ENCODE measurements at regions of chr2 and their contacts with region 1.

Region 1: DNA sequence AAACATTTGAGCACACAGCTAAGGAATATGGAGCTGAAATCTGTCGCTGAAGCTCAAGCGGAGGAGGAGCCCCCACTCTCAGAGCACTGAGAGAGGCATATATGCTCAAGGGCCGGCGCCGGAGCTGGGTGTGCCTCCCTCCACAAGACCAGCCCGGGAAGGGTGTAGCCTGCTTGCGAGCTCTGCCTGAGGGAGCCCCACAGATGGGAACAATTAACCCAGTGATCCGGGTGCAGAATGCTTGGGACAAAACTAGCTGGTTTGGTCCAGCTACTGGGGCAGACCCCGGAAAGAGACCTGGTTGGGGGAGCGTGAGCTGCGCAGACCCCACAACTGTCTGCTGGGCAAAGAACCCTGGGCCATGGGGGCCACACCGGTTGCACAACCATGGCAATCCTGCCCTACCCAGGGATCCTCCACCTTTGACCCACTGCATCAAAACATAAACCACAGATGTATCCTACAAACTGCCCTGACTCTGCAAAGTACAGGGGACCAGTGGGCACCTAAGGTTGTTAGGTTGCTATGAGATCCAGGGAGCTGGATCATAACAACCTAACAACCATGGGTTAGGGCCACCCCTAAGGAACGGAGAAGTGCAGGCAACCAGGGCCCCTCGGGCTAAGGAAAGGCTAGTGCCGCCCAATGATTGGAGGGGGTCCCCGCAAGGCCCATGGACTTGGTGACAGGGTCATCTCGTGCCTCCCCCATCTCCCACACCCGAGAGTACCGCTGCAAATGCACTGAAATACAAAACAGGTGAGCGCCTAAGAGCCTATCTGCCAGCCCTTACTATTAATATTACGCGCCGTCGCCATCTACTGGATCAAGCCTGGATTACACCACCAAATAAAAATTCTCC is 53.4 kb upstream of the SCN1A start:
- DNase-seq: peak; percentile 79
- ATAC-seq: peak; percentile 96
- H3K4me3 ChIP-seq: no peak overlapping the region
- H3K27ac ChIP-seq: peak overlapping the region; percentile 34
- H3K4me1 ChIP-seq: peaks cover 42% of the 10 kb centered on the region
- H3K27me3 ChIP-seq: no peaks in the 10 kb centered on the region
- CTCF ChIP-seq: peak; percentile 91
- EP300 ChIP-seq: peak in 1 of 2 experiments; percentile 50; a peak in 2 of 4 replicates
- POLR2A ChIP-seq: no peak
- RAD21 ChIP-seq: peak; percentile 88

Region 2: DNA sequence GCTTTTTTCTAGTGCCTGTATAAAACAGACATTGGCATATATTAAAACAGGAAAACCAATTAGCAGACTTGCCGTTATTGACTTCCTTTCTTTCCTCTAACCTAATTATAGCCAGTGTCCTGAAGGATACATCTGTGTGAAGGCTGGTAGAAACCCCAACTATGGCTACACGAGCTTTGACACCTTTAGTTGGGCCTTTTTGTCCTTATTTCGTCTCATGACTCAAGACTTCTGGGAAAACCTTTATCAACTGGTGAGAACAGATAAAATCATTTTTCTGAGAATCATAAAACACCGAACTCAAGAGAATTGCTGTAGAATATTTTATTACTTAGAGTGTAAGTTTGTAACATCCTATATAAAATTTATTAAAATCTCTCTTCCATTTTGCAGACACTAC is 867.7 kb before region 1 on chr2:
- CTCF ChIA-PET with region 1: no interaction called
- POLR2A ChIA-PET with region 1: no interaction called
- in situ Hi-C with region 1: no loop called
- intact Hi-C with region 1: no loop called
- DNase-seq: no peak
- ATAC-seq: no peak
- H3K4me3 ChIP-seq: no peak overlapping the region
- H3K27ac ChIP-seq: no peak overlapping the region
- H3K4me1 ChIP-seq: no peaks in the 10 kb centered on the region
- H3K27me3 ChIP-seq: 0 out of 5 replicates have a peak, but pooled peaks cover 0 to 2% of the 10 kb centered on the region in 2 experiments
- CTCF ChIP-seq: no peak
- EP300 ChIP-seq: no peak
- POLR2A ChIP-seq: no peak
- RAD21 ChIP-seq: no peak

Region 3: DNA sequence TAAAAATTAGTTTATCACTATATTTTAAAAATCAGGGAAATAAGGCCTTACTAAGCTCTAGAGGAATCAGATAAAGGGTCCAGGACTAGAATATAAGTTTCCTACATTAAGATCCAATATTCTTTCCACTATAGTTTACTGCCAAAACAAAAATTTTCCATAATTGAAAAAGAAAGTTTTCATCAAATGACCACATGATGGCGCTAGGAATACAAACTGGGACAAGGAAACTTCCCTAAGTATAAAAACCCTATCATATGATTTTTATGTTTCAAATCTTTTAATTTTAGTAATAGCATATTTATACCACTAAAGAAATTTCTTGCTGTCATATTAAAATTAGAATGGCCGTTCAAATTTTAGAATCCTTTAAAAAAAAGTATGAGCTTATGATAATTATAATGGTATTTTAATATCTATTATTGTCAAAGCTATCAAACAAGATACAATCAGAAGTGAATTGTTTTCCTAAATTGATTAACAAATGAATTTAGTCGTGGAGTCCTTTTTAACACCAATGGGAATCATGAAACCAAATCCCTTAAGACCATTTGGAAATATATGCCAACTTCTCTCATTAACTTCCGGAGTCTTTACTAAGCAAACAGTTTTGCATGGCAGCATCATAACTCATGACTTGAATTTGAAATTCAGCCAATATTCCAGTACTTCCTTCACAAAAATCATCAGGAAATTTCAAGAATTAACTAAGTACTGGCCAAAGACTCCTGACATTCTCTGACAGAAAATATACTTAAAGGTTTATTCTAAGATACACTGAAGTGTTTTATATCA is 123.6 kb before region 1 on chr2:
- CTCF ChIA-PET with region 1: interaction called, 36 read pairs
- POLR2A ChIA-PET with region 1: no interaction called
- in situ Hi-C with region 1: loop called (anchors 5 kb)
- intact Hi-C with region 1: loop called (anchors 1 kb)
- DNase-seq: peak; percentile 47
- ATAC-seq: no peak
- H3K4me3 ChIP-seq: no peak overlapping the region
- H3K27ac ChIP-seq: no peak overlapping the region
- H3K4me1 ChIP-seq: peaks cover 6% of the 10 kb centered on the region; the same call in 1 of the 2 replicates
- H3K27me3 ChIP-seq: no peaks in the 10 kb centered on the region
- CTCF ChIP-seq: peak; percentile 62
- EP300 ChIP-seq: no peak
- POLR2A ChIP-seq: no peak
- RAD21 ChIP-seq: peak; percentile 37; the same call in 1 of the 2 replicates

Region 4: GRCh38 chr2:166127217-166128155 is 53.7 kb before region 1 on chr2 and contains the start of gene SCN1A:
- CTCF ChIA-PET with region 1: interaction called, 7 read pairs
- POLR2A ChIA-PET with region 1: interaction called, 3 read pairs
- in situ Hi-C with region 1: no loop called
- intact Hi-C with region 1: loop called (anchors 1 kb)
- DNase-seq: peak; percentile 89
- ATAC-seq: peak; percentile 86
- H3K4me3 ChIP-seq: peak within 1 kb of the TSS; percentile 35 to 62 (median 50)
- H3K27ac ChIP-seq: peak within 1 kb of the TSS; percentile 72
- H3K4me1 ChIP-seq: peaks cover 93% of the 10 kb centered on the region
- H3K27me3 ChIP-seq: no peaks in the 10 kb centered on the region
- CTCF ChIP-seq: peak; percentile 81
- EP300 ChIP-seq: peak in 1 of 2 experiments; percentile 76; a peak in 2 of 4 replicates
- POLR2A ChIP-seq: no peak
- RAD21 ChIP-seq: peak; percentile 62; the same call in 1 of the 2 replicates
- total RNA-seq, gene SCN1A: 19.6 and 39.4 TPM in 2 replicates

Region 5: DNA sequence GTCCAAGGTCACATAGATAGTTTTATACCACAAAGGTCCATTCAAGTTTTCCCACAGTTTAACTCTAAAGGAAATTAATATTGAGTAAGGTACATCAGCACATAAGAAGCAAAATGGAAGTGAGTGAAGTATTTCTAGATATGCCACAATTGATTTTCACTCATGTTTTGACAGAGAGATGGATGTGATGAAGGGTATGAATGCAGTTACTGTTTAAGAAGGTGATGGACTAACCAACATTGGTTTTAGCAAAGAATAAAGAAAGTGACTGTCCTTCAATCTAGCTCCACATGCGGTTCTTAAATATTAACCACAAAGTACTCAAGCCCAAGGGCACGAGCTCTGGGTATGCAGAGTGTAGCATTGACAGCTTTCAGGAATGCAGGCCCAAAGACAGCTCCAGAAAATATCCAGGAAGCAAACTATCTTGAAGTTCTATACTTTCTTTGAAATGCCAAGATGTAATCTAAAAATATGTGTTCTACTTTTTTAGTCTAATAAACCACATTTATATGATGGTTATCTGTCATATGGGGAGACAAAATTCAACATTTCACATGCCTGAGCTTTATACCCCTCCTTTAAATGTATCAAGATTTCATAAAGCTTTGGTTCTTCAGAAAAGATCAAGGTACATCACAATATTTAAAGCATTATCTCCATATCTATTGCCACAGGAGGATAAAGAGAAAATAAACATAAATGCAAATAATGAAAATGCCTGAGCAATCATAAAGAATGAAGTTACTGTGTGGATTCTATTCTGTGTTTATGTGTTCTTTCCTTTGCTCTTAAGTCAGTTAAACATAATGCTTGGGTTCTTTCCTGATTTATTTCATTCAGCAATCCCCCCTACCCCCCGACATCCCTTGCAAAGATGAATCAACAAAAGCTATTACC is 46.7 kb before region 1 on chr2:
- CTCF ChIA-PET with region 1: no interaction called
- POLR2A ChIA-PET with region 1: interaction called, 41 read pairs
- in situ Hi-C with region 1: no loop called
- intact Hi-C with region 1: no loop called
- DNase-seq: peak; percentile 100
- ATAC-seq: peak; percentile 97
- H3K4me3 ChIP-seq: peak overlapping the region in 2 of 3 experiments; percentile 28 to 42; a peak in 3 of 6 replicates
- H3K27ac ChIP-seq: peak overlapping the region; percentile 97
- H3K4me1 ChIP-seq: peaks cover 94% of the 10 kb centered on the region
- H3K27me3 ChIP-seq: no peaks in the 10 kb centered on the region
- CTCF ChIP-seq: no peak
- EP300 ChIP-seq: peak in 1 of 2 experiments; percentile 99; a peak in 3 of 4 replicates
- POLR2A ChIP-seq: peak; percentile 41 to 86; a peak in 3 of 4 replicates
- RAD21 ChIP-seq: no peak

Region 6: DNA sequence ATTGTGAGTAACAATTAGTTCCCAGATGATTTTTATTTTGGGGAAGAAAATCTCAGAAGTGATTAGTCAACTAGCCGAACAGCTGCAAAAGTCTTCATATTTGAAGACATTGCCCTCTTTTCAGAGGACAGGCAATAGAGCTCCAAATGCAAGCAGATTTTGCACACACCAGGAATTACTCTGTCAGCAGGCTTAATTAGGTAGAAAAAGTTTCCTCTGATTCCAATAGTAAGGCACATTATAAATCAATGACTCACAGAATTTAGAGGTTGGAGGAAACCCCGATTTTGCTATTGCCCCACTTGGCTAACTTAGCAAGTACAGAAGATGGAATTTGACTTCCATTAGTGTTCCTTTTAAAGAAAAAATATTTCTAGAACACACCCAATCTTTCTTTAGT is 22.6 kb before region 1 on chr2:
- CTCF ChIA-PET with region 1: interaction called, 5 read pairs
- POLR2A ChIA-PET with region 1: interaction called, 9 read pairs
- in situ Hi-C with region 1: no loop called
- intact Hi-C with region 1: loop called (anchors 2 kb)
- DNase-seq: no peak
- ATAC-seq: no peak
- H3K4me3 ChIP-seq: no peak overlapping the region
- H3K27ac ChIP-seq: no peak overlapping the region
- H3K4me1 ChIP-seq: peaks cover 71% of the 10 kb centered on the region
- H3K27me3 ChIP-seq: no peaks in the 10 kb centered on the region
- CTCF ChIP-seq: no peak
- EP300 ChIP-seq: no peak
- POLR2A ChIP-seq: no peak
- RAD21 ChIP-seq: no peak

Region 7: DNA sequence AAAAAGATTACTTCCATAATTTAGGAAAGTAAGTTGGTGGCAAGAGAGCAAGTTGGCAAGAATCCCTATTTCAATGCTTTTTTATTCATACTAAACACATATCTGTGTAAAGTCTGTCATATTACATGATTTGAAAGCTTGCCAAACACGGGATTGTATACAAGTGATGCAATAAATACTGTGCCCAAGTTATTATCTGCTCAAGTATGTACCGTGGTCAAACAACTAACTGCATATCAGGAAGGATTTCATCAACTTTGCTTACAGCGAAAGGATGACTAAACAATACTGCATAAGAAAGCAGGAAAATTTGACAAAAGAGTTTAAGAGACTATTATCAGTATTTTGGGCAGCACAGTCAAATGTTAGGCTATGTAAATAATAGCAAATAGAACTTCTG is 16.3 kb after region 1 on chr2:
- CTCF ChIA-PET with region 1: no interaction called
- POLR2A ChIA-PET with region 1: no interaction called
- in situ Hi-C with region 1: no loop called
- intact Hi-C with region 1: no loop called
- DNase-seq: peak; percentile 20
- ATAC-seq: no peak
- H3K4me3 ChIP-seq: no peak overlapping the region
- H3K27ac ChIP-seq: no peak overlapping the region
- H3K4me1 ChIP-seq: 0 out of 2 replicates have a peak, but pooled peaks cover 5% of the 10 kb centered on the region
- H3K27me3 ChIP-seq: no peaks in the 10 kb centered on the region
- CTCF ChIP-seq: no peak
- EP300 ChIP-seq: no peak
- POLR2A ChIP-seq: no peak
- RAD21 ChIP-seq: no peak

Region 8: DNA sequence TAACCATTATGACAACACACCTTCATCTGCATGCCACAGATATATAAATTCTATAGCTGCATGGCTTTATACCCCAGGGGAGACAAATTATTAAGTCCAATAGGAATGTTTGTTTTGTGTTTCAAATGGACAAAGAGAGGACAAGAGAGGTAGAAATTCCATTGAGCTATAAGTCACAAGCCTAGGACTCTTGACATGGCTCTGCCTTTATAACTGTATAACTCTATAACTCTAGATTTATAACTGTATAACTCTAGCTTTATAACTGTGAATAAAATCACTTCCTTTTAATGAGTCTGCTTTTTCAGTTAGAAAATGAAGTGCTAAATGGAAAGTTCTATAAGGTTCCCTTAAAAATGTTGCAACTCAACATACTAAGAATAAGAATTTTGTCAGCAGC is 88.1 kb after region 1 on chr2:
- CTCF ChIA-PET with region 1: no interaction called
- POLR2A ChIA-PET with region 1: no interaction called
- in situ Hi-C with region 1: no loop called
- intact Hi-C with region 1: no loop called
- DNase-seq: no peak
- ATAC-seq: no peak
- H3K4me3 ChIP-seq: no peak overlapping the region
- H3K27ac ChIP-seq: no peak overlapping the region
- H3K4me1 ChIP-seq: no peaks in the 10 kb centered on the region
- H3K27me3 ChIP-seq: no peaks in the 10 kb centered on the region
- CTCF ChIP-seq: no peak
- EP300 ChIP-seq: no peak
- POLR2A ChIP-seq: no peak
- RAD21 ChIP-seq: no peak

Region 9: GRCh38 chr2:166424841-166425240 is 243.7 kb after region 1 on chr2:
- CTCF ChIA-PET with region 1: no interaction called
- POLR2A ChIA-PET with region 1: no interaction called
- in situ Hi-C with region 1: no loop called
- intact Hi-C with region 1: loop called (anchors 5 kb)
- DNase-seq: no peak
- ATAC-seq: peak; percentile 54
- H3K4me3 ChIP-seq: no peak overlapping the region
- H3K27ac ChIP-seq: no peak overlapping the region
- H3K4me1 ChIP-seq: no peaks in the 10 kb centered on the region
- H3K27me3 ChIP-seq: no peaks in the 10 kb centered on the region
- CTCF ChIP-seq: no peak
- EP300 ChIP-seq: no peak
- POLR2A ChIP-seq: no peak
- RAD21 ChIP-seq: no peak

Region 10: DNA sequence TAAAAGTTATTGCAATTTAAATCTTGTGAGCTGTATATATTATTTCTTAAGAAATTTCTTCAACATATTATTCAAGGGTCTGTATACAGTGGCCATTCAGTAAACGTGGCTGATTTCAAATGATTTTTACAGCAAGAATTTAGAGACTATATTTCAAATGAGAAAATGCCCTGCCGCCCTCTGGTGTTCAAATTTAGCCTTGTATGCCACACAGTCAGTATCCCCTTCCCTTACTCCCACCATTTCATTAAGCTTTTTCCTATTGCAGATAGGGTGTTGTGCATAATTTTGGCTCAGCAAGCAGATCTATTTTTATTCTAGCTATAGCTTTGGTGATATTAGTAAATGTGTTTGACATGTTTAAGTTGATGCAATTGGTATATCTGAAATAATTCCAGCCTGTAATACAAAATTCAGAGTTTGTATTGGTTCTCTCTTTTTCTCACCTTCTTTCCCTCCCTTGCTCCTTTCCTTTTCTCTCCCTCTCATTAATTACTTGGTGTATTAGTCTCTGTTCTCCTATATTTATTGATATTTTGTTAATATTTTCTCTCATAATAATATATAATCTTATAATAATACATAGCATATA is 335.6 kb after region 1 on chr2:
- CTCF ChIA-PET with region 1: no interaction called
- POLR2A ChIA-PET with region 1: no interaction called
- in situ Hi-C with region 1: no loop called
- intact Hi-C with region 1: loop called (anchors 2 kb)
- DNase-seq: peak; percentile 25
- ATAC-seq: peak; percentile 83
- H3K4me3 ChIP-seq: no peak overlapping the region
- H3K27ac ChIP-seq: no peak overlapping the region
- H3K4me1 ChIP-seq: no peaks in the 10 kb centered on the region
- H3K27me3 ChIP-seq: no peaks in the 10 kb centered on the region
- CTCF ChIP-seq: peak; percentile 69
- EP300 ChIP-seq: no peak
- POLR2A ChIP-seq: no peak
- RAD21 ChIP-seq: no peak

Measured in HepG2 (cell line).